CD4-positive, alpha-beta memory T cell (primary cell): ENCODE measurements at regions of chr5 and their contacts with region 1.

Region 1: DNA sequence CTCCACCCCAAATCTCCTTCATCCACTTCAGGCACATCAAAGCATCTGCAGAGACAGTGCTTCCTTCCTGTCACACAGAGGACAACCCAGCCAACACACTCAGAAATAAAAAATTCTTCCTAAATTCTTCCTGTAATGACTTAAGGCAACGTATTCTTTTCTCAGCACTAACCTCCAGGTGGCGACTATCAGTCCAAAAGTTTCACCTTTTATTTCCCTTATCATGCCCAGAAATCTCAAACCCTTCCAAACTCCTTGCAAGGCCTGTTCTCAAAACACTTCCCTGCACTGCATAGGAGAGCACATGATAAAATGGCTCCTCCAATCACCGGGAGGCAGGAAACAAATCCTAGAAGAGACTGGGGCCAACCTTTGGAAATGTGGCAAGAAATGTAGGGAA is 35.1 kb downstream of the SLIT3 start:
- DNase-seq: no peak
- H3K4me3 ChIP-seq: no peak overlapping the region
- H3K4me3 Mint-ChIP-seq: no peak overlapping the region
- H3K27ac ChIP-seq: no peak overlapping the region
- H3K27ac Mint-ChIP-seq: no peak overlapping the region
- H3K4me1 ChIP-seq: no peaks in the 10 kb centered on the region
- H3K4me1 Mint-ChIP-seq: no peaks in the 10 kb centered on the region
- H3K27me3 ChIP-seq: no peaks in the 10 kb centered on the region
- H3K27me3 Mint-ChIP-seq: peaks cover 3 to 6% of the 10 kb centered on the region in 2 donors

Region 2: DNA sequence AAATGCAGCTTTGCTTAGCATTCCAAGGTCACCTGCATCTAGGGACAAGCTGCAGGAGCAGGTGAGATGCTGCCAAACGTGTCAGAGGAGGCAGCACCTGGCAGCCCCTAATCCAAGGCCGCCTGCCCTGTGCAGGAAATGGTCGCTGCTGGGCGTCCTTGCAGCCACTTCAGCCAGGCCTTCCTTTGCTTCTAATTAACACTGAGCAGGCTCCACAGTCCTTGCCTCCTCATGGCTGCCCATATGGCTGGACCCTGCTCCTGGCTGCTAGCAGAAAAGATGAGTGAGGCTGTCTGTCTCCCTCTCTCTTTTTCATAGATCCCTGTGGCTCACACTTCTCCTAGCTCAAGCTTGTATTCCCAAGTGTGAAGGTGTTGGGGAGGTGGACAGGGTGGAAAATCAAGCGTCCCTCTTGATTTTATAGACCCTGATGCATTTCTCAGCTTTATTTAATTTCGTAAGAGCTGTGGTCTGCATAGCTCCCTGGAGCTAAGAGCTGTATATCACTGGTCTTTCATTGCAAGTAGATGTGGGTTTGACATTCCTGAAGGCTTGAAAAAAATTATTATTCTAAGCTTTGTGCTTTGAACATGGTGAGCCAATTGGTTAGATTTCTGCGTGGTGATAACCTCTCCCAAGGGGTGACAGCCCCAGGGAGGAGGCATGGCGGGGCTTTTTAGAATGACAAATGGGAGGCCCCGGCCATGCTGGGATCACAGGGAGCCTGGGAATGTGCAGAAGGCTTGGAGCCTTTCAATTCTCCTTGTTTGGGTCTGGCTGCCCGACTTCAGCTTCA is 158.8 kb before region 1 on chr5:
- CTCF ChIA-PET with region 1: no interaction called
- POLR2A ChIA-PET with region 1: no interaction called
- intact Hi-C with region 1: no loop called
- DNase-seq: no peak
- H3K4me3 ChIP-seq: no peak overlapping the region
- H3K4me3 Mint-ChIP-seq: no peak overlapping the region
- H3K27ac ChIP-seq: no peak overlapping the region
- H3K27ac Mint-ChIP-seq: no peak overlapping the region
- H3K4me1 ChIP-seq: no peaks in the 10 kb centered on the region
- H3K4me1 Mint-ChIP-seq: no peaks in the 10 kb centered on the region
- H3K27me3 ChIP-seq: no peaks in the 10 kb centered on the region
- H3K27me3 Mint-ChIP-seq: peaks cover 3% of the 10 kb centered on the region in 2 donors

Region 3: GRCh38 chr5:169161022-169161680 is 104.7 kb before region 1 on chr5:
- CTCF ChIA-PET with region 1: no interaction called
- POLR2A ChIA-PET with region 1: no interaction called
- intact Hi-C with region 1: no loop called
- DNase-seq: no peak
- H3K4me3 ChIP-seq: no peak overlapping the region
- H3K4me3 Mint-ChIP-seq: no peak overlapping the region
- H3K27ac ChIP-seq: no peak overlapping the region
- H3K27ac Mint-ChIP-seq: no peak overlapping the region
- H3K4me1 ChIP-seq: no peaks in the 10 kb centered on the region
- H3K4me1 Mint-ChIP-seq: no peaks in the 10 kb centered on the region
- H3K27me3 ChIP-seq: no peaks in the 10 kb centered on the region
- H3K27me3 Mint-ChIP-seq: no peaks in the 10 kb centered on the region

Region 4: DNA sequence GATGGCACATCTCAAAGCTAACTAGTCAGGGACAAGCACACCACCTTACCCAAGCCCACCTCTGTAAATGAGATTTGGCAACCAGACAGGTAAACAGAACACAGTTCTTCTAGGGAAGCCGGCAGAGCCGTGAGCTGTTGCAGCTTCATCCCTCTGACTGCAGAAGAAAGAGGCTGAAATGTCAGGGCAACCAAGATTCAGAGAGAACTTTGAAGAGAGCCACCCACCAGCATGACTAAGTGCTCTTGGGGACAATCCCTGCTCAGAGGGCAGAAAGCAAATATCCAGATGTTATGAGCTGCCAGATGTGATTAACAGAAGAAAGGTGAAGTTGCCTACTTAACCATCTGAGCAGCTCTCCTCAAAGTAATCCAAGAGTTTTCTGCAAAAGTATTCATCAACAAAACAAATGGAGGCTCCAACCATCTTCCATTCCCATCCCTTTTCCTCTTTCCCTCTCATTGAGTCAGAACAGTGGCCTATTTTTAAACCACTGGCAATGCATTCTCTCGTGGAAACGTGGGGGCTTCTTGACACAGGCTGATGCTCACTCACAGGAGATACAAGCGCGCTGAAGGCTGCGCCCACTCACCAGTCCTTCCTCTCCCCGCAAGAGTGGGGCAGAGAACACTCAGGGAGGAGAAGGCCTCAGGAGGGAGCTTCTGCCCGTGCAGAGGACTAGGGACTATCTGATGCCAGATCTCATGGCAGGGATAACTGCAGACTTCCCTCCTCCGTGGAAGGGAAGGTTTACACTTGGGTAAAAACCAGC is 22.1 kb before region 1 on chr5:
- CTCF ChIA-PET with region 1: no interaction called
- POLR2A ChIA-PET with region 1: no interaction called
- intact Hi-C with region 1: loop called (anchors 1 kb)
- DNase-seq: no peak
- H3K4me3 ChIP-seq: no peak overlapping the region
- H3K4me3 Mint-ChIP-seq: no peak overlapping the region
- H3K27ac ChIP-seq: no peak overlapping the region
- H3K27ac Mint-ChIP-seq: no peak overlapping the region
- H3K4me1 ChIP-seq: no peaks in the 10 kb centered on the region
- H3K4me1 Mint-ChIP-seq: peaks cover 0 to 2% (median 0%) of the 10 kb centered on the region in 4 donors
- H3K27me3 ChIP-seq: no peaks in the 10 kb centered on the region
- H3K27me3 Mint-ChIP-seq: peaks cover 12 to 14% of the 10 kb centered on the region in 2 donors

Region 5: GRCh38 chr5:169280286-169280685 is 14.4 kb after region 1 on chr5:
- CTCF ChIA-PET with region 1: no interaction called
- POLR2A ChIA-PET with region 1: no interaction called
- intact Hi-C with region 1: no loop called
- DNase-seq: no peak
- H3K4me3 ChIP-seq: no peak overlapping the region
- H3K4me3 Mint-ChIP-seq: no peak overlapping the region
- H3K27ac ChIP-seq: no peak overlapping the region
- H3K27ac Mint-ChIP-seq: no peak overlapping the region
- H3K4me1 ChIP-seq: no peaks in the 10 kb centered on the region
- H3K4me1 Mint-ChIP-seq: no peaks in the 10 kb centered on the region
- H3K27me3 ChIP-seq: no peaks in the 10 kb centered on the region
- H3K27me3 Mint-ChIP-seq: peaks cover 0 to 3% of the 10 kb centered on the region in 2 donors